ENCODE measurements at regions of chr9 and their contacts with region 1.

Region 1: GRCh38 chr9:130927995-130928900 is 10.8 kb downstream of the FIBCD1 start:
- DNase-seq: peak; percentile 89 to 97
- H3K4me3 ChIP-seq: peak overlapping the region; percentile 41; the same call in 1 of the 2 replicates
- H3K27ac ChIP-seq: peak overlapping the region; percentile 93
- H3K4me1 ChIP-seq: peaks cover 39% of the 10 kb centered on the region
- H3K27me3 ChIP-seq: no peaks in the 10 kb centered on the region
- CTCF ChIP-seq: no peak

Region 2: GRCh38 chr9:130912932-130913598 is 15.2 kb before region 1 on chr9:
- CTCF ChIA-PET with region 1: interaction called, 22 read pairs
- POLR2A ChIA-PET with region 1: no interaction called
- intact Hi-C with region 1: loop called (anchors 2 kb)
- DNase-seq: peak; percentile 54 to 66
- H3K4me3 ChIP-seq: peak overlapping the region; percentile 34
- H3K27ac ChIP-seq: no peak overlapping the region
- H3K4me1 ChIP-seq: 0 out of 2 replicates have a peak, but pooled peaks cover 4% of the 10 kb centered on the region
- H3K27me3 ChIP-seq: 0 out of 2 replicates have a peak, but pooled peaks cover 8% of the 10 kb centered on the region
- CTCF ChIP-seq: no peak

Region 3: DNA sequence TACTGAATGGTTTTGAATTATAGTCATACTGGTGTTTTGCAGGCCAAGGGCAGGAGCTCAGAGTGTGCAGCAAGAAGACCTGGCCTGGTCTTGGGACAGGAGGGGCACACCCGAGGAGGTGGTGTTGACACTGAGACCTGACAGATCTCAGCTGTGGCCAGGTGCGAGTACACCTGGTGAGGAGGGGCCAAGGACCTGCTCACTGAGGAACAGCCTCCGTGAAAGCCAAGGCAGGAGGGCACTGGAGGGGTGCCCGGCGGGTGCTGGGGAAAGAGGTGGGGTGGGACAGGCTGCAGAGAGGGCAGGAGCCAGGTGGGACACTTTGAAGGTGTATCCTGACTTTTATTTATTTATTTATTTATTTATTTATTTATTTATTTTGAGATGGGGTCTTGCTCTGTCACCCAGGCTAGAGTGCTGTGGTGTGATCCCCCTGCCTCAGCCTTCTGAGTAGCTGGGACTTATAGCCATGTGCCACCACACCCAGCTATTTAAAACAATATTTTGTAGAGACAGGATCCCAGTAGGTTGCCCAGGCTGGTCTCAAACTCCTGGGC is 57.4 kb after region 1 on chr9:
- CTCF ChIA-PET with region 1: no interaction called
- POLR2A ChIA-PET with region 1: interaction called, 11 read pairs
- intact Hi-C with region 1: no loop called
- DNase-seq: no peak
- H3K4me3 ChIP-seq: no peak overlapping the region
- H3K27ac ChIP-seq: no peak overlapping the region
- H3K4me1 ChIP-seq: no peaks in the 10 kb centered on the region
- H3K27me3 ChIP-seq: peaks cover 32% of the 10 kb centered on the region
- CTCF ChIP-seq: no peak